ENCODE measurements at regions of chr4 and their contacts with region 1.

Region 1: GRCh38 chr4:121192480-121192879 is 28.4 kb upstream of the TNIP3 start:
- DNase-seq: peak in 2 of 3 donors; percentile 31 to 56
- H3K4me3 ChIP-seq: no peak overlapping the region
- H3K4me3 Mint-ChIP-seq: no peak overlapping the region
- H3K27ac ChIP-seq: no peak overlapping the region
- H3K27ac Mint-ChIP-seq: no peak overlapping the region
- H3K4me1 ChIP-seq: no peaks in the 10 kb centered on the region
- H3K4me1 Mint-ChIP-seq: peaks cover 1% of the 10 kb centered on the region
- H3K27me3 ChIP-seq: no peaks in the 10 kb centered on the region
- H3K27me3 Mint-ChIP-seq: peaks cover 0 to 3% (median 0%) of the 10 kb centered on the region in 3 donors
- CTCF ChIP-seq: peak; percentile 90

Region 2: GRCh38 chr4:121252224-121252806 is 59.8 kb after region 1 on chr4:
- intact Hi-C with region 1: loop called in 1 of 2 experiments (anchors 10 kb)
- DNase-seq: peak; percentile 44 to 60 (median 60)
- H3K4me3 ChIP-seq: no peak overlapping the region
- H3K4me3 Mint-ChIP-seq: no peak overlapping the region
- H3K27ac ChIP-seq: no peak overlapping the region
- H3K27ac Mint-ChIP-seq: no peak overlapping the region
- H3K4me1 ChIP-seq: peaks cover 23 to 25% of the 10 kb centered on the region in 2 donors
- H3K4me1 Mint-ChIP-seq: peaks cover 21% of the 10 kb centered on the region
- H3K27me3 ChIP-seq: no peaks in the 10 kb centered on the region
- H3K27me3 Mint-ChIP-seq: peaks cover 0 to 2% (median 0%) of the 10 kb centered on the region in 3 donors
- CTCF ChIP-seq: peak; percentile 81

Region 3: GRCh38 chr4:121307445-121308327 is 115.2 kb after region 1 on chr4:
- intact Hi-C with region 1: loop called in 1 of 2 experiments (anchors 5 kb)
- DNase-seq: peak; percentile 8 to 34 (median 23)
- H3K4me3 ChIP-seq: no peak overlapping the region
- H3K4me3 Mint-ChIP-seq: no peak overlapping the region
- H3K27ac ChIP-seq: no peak overlapping the region
- H3K27ac Mint-ChIP-seq: no peak overlapping the region
- H3K4me1 ChIP-seq: no peaks in the 10 kb centered on the region
- H3K4me1 Mint-ChIP-seq: peaks cover 6% of the 10 kb centered on the region
- H3K27me3 ChIP-seq: no peaks in the 10 kb centered on the region
- H3K27me3 Mint-ChIP-seq: peaks cover 0 to 2% (median 2%) of the 10 kb centered on the region in 3 donors
- CTCF ChIP-seq: peak; percentile 88

Measured in CD14-positive monocyte (primary cell).